ENCODE measurements at regions of chr16 and their contacts with region 1.

Region 1: GRCh38 chr16:48526058-48526957 is 83.7 kb downstream of the N4BP1 start:
- DNase-seq: peak; percentile 80
- H3K4me3 ChIP-seq: no peak overlapping the region
- H3K27ac ChIP-seq: no peak overlapping the region
- H3K4me1 ChIP-seq: no peaks in the 10 kb centered on the region
- H3K27me3 ChIP-seq: no peaks in the 10 kb centered on the region
- CTCF ChIP-seq: peak; percentile 37

Region 2: DNA sequence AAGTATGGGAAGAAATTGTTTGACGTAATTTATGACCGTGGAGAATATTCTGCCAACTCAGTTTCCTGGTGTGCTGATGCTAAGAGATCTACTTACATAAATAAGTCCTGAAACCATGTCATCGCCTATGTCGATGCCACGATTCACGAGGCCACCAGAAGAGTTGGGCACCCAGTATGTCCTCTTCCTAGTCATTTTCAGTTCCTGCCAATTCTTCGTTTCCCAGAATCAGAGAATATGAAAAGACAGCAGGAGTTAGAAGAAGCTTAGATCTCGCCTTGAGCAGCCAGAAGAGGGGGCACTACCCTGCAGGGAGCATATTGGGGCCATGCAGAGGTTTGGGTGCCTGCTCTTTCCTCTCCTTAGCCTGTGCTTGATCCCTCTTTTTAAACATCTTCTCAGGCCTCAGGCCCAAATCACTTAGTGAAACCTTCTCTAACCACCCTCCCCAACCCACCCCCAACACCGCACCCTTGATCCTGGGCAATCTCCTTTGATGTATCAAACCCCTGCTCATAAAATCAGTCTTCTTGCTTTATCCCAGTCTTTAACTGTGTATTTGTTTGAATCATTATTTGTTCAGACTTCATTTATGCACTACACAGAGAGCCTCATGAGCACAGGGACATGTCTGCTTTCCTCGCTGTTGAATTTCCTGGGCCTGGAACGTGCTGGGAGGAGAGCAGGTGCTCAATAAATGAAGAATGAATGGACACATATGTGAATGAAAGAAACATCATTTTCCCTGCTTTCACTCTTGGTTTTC is 294.4 kb before region 1 on chr16:
- intact Hi-C with region 1: loop called (anchors 5 kb)
- DNase-seq: peak; percentile 35
- H3K4me3 ChIP-seq: no peak overlapping the region
- H3K27ac ChIP-seq: no peak overlapping the region
- H3K4me1 ChIP-seq: no peaks in the 10 kb centered on the region
- H3K27me3 ChIP-seq: no peaks in the 10 kb centered on the region
- CTCF ChIP-seq: peak; percentile 21